ENCODE measurements at regions of chr20 and their contacts with region 1.

Region 1: DNA sequence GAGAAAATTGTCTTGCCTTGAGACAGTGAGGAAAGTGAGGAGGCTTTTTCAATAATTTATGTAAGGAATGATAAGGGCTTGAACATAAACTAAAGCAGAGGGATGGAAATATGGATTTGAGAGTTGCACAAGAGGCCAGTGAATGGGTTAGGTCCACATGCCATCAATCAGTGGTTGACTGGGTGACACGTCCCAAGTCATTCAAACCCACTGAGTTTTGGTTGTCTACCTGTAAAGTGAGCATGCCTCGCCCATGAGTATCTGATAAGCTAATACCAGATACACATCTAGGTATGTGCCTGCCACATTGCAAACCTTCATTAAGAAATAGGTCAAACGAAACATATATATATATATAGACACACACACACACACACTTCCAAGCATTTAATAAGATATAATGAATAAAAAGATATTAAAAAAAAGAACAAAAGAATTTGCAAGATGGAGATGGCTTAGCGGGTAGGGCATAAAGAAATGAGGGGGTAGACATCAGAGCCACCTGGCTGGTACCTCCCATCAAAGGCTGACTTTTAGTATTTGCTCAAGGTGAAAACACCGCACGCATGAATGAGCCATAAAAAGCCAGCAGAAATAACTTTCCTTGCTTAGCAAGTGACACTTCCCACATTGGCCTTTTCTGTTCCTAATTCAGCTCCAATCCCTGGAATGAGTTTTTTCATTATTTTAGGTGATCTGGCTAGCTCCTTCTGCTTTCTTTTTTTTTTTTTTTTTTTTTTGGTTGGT is 109.1 kb upstream of the GGTLC1 start:
- DNase-seq: no peak
- H3K4me3 ChIP-seq: no peak overlapping the region
- H3K27me3 ChIP-seq: no peaks in the 10 kb centered on the region
- CTCF ChIP-seq: no peak

Region 2: GRCh38 chr20:23550232-23550631 is 547.4 kb before region 1 on chr20:
- CTCF ChIA-PET with region 1: no interaction called
- POLR2A ChIA-PET with region 1: no interaction called
- DNase-seq: no peak
- H3K4me3 ChIP-seq: no peak overlapping the region
- H3K27me3 ChIP-seq: no peaks in the 10 kb centered on the region
- CTCF ChIP-seq: no peak

Region 3: GRCh38 chr20:24002896-24003295 is 94.8 kb before region 1 on chr20:
- CTCF ChIA-PET with region 1: no interaction called
- POLR2A ChIA-PET with region 1: interaction called, 17 read pairs
- DNase-seq: no peak
- H3K4me3 ChIP-seq: no peak overlapping the region
- H3K27me3 ChIP-seq: peaks cover 2% of the 10 kb centered on the region
- CTCF ChIP-seq: no peak

Measured in BJ (cell line).